ENCODE measurements at regions of chr5 and their contacts with region 1.

Region 1: DNA sequence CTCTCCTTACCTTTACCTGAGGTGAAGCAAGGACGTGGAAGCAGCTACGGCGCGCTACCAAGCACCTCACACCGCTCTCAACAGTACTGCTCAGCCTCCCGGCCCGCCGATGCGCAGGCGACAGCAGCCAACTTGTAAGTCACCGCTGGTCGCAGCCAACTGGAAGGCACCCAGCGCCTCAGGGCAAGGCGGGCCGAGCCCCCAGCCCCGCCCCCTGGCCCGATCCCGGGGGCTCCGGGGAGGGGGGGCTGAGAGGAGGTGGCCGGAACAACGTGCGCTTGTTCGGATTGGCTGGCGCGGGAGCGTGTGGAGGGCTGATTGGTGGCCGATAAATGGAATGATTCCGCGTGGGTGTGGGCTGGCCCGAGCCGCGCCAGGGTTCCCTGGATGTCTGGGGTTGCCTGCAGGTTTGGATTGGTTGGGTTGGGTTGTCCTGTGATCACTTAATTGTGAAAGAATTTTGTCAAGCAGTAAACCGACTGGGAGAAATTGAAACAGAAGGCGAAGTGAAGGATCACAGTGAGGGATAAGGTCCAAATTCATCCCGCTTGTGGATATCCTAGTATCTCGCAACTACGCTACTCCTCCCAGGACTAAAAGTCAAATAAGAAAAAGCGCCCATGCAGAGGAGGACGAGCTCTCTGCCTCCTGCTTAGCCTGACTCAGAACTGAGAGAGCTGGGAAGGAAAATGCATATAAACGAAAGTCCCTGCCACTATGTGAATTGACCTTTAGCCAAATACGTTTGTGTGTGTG is at the start of gene STARD4:
- DNase-seq: peak; percentile 94
- H3K4me3 Mint-ChIP-seq: peak within 1 kb of the TSS; percentile 88
- H3K27ac Mint-ChIP-seq: peak within 1 kb of the TSS; percentile 99
- H3K4me1 Mint-ChIP-seq: peaks cover 61% of the 10 kb centered on the region
- H3K27me3 Mint-ChIP-seq: no peaks in the 10 kb centered on the region
- total RNA-seq, gene STARD4: 149 and 163 TPM in 2 replicates

Region 2: GRCh38 chr5:110738812-110739651 is 773.5 kb before region 1 on chr5 and contains the start of gene SLC25A46:
- intact Hi-C with region 1: loop called (anchors 5 kb)
- DNase-seq: peak; percentile 85
- H3K4me3 Mint-ChIP-seq: peak within 1 kb of the TSS; percentile 97
- H3K27ac Mint-ChIP-seq: peak within 1 kb of the TSS; percentile 96
- H3K4me1 Mint-ChIP-seq: peaks cover 39% of the 10 kb centered on the region
- H3K27me3 Mint-ChIP-seq: peaks cover 11% of the 10 kb centered on the region
- total RNA-seq, gene SLC25A46: 54.6 and 55.4 TPM in 2 replicates

Region 3: DNA sequence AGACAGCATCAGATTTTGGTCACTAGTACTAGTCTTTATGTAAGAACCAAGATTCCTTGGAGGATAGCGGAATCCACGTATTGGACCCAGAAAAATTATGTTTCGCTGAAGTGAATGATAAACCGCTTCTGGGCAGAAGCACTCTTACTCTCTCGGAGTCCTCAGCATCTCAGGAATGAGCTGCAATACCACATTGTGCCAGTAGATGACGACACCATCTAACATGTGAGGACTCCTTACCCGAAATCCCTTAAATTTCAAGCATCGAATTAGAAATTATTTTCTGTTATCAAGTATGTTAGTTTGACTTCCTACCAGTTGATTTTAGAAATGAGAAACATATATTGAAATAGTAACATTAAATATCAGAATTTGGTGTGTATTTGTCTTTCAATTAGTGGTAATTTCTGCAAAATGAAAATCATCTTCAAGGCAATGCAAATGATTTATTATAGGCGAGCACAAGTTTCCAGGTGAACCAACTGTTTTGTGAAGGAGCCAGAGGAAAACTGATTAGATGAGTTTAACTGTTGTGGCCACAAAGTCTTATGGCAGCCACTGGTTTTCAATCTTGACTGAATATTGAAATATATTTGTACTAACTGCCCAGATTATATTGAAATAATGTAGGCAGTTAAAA is 354.3 kb before region 1 on chr5:
- intact Hi-C with region 1: loop called (anchors 5 kb)
- DNase-seq: peak; percentile 62
- H3K4me3 Mint-ChIP-seq: no peak overlapping the region
- H3K27ac Mint-ChIP-seq: no peak overlapping the region
- H3K4me1 Mint-ChIP-seq: peaks cover 4% of the 10 kb centered on the region
- H3K27me3 Mint-ChIP-seq: no peaks in the 10 kb centered on the region

Region 4: DNA sequence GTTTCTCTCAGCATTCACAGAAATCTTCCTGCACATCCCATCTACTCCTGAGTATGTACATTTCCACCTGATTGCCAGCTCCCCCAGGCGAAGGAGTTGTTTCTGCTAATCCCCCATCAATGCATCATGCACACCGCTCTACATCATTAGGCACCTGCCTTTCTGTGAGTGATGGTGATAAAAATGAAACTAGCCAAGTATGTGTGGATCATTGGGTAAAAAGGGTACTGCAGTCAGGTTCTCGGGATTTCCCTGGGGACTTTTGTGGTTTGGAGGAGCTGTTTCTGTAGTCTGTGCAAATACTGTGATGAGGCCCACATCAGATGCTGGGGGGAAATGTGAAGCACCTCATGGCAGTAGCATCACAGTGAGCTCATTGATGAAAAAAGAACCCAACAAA is 257.9 kb before region 1 on chr5:
- intact Hi-C with region 1: loop called (anchors 1 kb)
- DNase-seq: peak; percentile 75
- H3K4me3 Mint-ChIP-seq: peak overlapping the region; percentile 16
- H3K27ac Mint-ChIP-seq: peak overlapping the region; percentile 74
- H3K4me1 Mint-ChIP-seq: peaks cover 75% of the 10 kb centered on the region
- H3K27me3 Mint-ChIP-seq: no peaks in the 10 kb centered on the region

Region 5: DNA sequence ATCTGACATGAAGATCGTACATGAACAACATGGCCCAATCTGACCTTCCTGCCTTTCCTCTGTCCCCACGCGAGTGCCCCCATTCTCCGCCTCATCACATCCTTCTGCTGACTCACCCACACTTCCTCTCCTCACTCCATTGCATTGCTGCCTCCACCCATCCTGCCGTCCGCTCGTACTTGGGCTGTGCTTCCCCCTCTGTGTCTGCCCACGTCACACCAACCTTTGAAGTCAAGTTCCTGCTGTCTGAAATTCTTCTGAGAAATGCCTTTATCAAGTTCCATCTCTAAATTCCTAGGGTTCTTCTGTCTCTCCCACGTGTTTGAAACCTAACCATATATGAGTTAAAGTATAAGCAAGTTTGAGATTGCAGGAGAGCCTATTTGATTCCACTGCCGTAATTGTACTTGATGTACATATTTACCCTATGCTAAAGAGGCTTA is 17.8 kb after region 1 on chr5:
- intact Hi-C with region 1: loop called (anchors 1 kb)
- DNase-seq: peak; percentile 82
- H3K4me3 Mint-ChIP-seq: peak overlapping the region; percentile 38
- H3K27ac Mint-ChIP-seq: peak overlapping the region; percentile 89
- H3K4me1 Mint-ChIP-seq: peaks cover 33% of the 10 kb centered on the region
- H3K27me3 Mint-ChIP-seq: no peaks in the 10 kb centered on the region

Region 6: DNA sequence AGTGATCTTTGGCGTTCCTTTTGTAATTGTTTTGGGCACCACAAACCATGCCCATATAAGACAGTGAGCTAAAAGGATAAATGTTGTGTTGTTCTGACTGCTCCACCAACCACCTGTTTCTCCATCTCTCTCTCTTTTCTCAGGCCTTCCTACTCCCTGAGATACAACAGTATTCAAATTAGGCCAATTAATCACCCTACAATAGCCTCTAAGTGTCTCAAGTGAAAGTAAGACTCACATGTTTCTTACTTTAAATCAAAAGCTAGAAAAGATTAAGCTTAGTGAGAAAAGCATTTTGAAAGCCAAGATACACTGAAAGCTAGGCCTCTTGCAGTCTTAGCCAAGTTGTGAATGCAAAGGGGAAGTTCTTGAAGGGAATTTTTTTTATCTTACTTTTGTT is 513.2 kb after region 1 on chr5:
- intact Hi-C with region 1: no loop called
- DNase-seq: no peak
- H3K4me3 Mint-ChIP-seq: no peak overlapping the region
- H3K27ac Mint-ChIP-seq: no peak overlapping the region
- H3K4me1 Mint-ChIP-seq: no peaks in the 10 kb centered on the region
- H3K27me3 Mint-ChIP-seq: peaks cover 1% of the 10 kb centered on the region

Region 7: GRCh38 chr5:112154940-112155686 is 642.6 kb after region 1 on chr5:
- intact Hi-C with region 1: loop called (anchors 1 kb)
- DNase-seq: no peak
- H3K4me3 Mint-ChIP-seq: no peak overlapping the region
- H3K27ac Mint-ChIP-seq: peak overlapping the region; percentile 31
- H3K4me1 Mint-ChIP-seq: peaks cover 6% of the 10 kb centered on the region
- H3K27me3 Mint-ChIP-seq: peaks cover 11% of the 10 kb centered on the region